ENCODE measurements at regions of chr6 and their contacts with region 1.

Region 1: DNA sequence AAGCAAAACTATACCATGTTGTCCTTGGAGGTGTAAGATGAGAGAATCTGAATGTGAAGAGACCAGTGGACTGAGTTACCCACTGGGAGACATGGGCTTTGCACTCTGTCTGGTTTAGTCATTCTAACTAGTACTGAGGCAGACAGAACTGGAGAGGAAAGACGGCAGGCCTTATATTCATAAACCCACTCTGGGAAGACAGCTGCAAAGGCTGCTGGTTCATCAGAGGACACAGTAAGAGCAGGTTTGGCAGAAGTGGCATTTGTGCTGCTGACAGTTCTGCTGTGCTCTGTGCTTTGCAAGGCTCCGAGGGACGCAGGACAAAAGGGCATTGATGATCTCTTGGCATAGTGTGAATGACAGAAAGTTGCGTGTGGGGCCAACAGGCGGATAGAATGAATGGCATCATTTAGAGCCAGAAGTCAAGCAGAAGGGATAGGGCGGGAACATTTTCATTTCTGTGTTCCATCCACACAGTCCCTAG is 142.3 kb upstream of the TENT5A start:
- DNase-seq: no peak
- ATAC-seq: peak; percentile 60
- H3K4me3 ChIP-seq: no peak overlapping the region
- H3K27ac ChIP-seq: peak overlapping the region in 1 of 2 donors; percentile 5
- H3K4me1 ChIP-seq: peaks cover 0 to 5% of the 10 kb centered on the region in 2 donors
- H3K27me3 ChIP-seq: no peaks in the 10 kb centered on the region

Region 2: DNA sequence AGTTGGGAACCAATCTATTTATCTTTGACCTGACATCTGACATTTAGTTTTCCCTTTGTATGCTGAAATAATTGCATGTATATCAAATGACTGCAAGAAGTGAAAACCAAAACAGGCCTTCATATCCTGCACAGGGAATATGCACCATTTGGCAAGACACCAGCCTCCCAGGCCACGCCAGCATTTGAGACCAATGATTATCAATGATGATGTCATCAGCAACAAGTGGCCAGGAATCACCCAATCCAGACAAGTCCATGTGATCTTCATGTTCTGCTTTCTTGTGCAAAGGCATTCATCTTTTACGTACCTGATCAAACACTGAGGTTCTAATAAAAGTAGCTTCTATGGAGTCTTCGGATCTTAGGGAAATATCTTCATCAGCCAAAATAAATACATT is 34.9 kb before region 1 on chr6:
- intact Hi-C with region 1: loop called in 1 of 2 experiments (anchors 5 kb)
- DNase-seq: peak; percentile 70 to 83
- ATAC-seq: peak; percentile 73
- H3K4me3 ChIP-seq: no peak overlapping the region
- H3K27ac ChIP-seq: peak overlapping the region in 1 of 2 donors; percentile 37
- H3K4me1 ChIP-seq: peaks cover 8 to 22% of the 10 kb centered on the region in 2 donors
- H3K27me3 ChIP-seq: no peaks in the 10 kb centered on the region